ENCODE measurements at regions of chr16 and their contacts with region 1.

Region 1: GRCh38 chr16:83952940-83953795 is at the start of gene OSGIN1:
- DNase-seq: peak; percentile 33
- H3K4me3 ChIP-seq: peak within 1 kb of the TSS; percentile 12
- H3K27ac ChIP-seq: no peak within 1 kb of the TSS
- H3K4me1 ChIP-seq: peaks cover 8% of the 10 kb centered on the region
- CTCF ChIP-seq: no peak
- total RNA-seq, gene OSGIN1: 0.28 and 0.41 TPM in 2 replicates

Region 2: DNA sequence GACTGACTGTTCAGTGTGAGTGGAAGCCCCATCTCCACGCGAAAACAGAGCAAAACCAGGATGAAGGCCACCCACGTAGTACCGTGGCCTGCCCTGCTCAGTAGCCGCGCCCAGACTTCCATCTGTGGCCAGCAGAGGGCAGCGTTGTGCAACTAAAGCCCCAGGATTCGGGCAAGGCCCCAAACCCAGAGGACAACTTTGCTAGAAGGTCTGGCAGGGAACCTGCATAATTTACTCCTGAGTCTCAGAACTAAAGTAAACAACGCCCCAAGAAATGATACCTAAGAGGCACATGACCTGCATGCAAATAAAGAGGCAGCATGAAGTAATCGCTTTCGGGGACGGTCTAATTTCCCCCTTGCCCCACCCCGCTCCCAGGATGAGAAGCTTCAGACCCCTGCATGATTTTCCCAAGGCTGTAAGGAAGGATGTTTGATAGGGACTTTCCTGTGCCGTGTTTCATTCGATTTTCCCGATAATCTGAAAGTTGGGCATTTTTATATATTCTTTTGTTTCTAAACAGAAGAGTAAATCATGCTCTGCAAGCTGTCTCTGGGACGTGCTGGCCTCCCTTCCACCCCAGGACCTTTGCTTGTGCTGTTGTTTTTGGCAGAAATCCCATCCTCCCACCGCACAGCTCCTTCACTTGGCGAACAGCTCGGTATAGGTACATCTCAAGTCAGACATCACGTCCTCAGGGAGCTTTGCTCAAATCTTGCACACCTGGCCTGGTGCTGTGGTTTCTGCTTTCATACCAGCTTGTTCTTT is 126.8 kb before region 1 on chr16:
- CTCF ChIA-PET with region 1: no interaction called
- POLR2A ChIA-PET with region 1: no interaction called
- intact Hi-C with region 1: loop called (anchors 10 kb)
- DNase-seq: peak; percentile 74
- H3K4me3 ChIP-seq: no peak overlapping the region
- H3K27ac ChIP-seq: no peak overlapping the region
- H3K4me1 ChIP-seq: no peaks in the 10 kb centered on the region
- CTCF ChIP-seq: peak; percentile 95

Region 3: DNA sequence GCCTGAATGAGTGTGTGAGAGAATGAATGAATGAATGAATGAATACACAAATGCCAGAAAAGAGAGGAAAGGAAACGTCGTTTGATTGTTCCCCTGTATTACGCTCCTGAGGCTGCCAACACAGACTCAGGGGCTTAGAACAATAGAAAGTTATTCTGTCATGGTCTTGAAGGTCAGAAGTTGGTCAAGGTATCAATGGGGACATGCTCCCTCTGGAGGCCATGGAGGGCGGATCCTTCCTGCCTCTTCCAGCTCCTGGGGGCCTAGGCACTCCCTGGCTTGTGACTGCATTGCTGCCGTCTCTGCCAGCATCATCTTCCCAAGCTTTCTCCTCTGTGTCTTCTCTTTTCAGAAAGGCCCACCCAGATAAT is 90.9 kb after region 1 on chr16:
- CTCF ChIA-PET with region 1: no interaction called
- POLR2A ChIA-PET with region 1: no interaction called
- intact Hi-C with region 1: loop called (anchors 1 kb)
- DNase-seq: peak; percentile 14
- H3K4me3 ChIP-seq: no peak overlapping the region
- H3K27ac ChIP-seq: no peak overlapping the region
- H3K4me1 ChIP-seq: no peaks in the 10 kb centered on the region
- CTCF ChIP-seq: peak; percentile 59

Region 4: GRCh38 chr16:84065536-84066132 is 112.5 kb after region 1 on chr16:
- CTCF ChIA-PET with region 1: no interaction called
- POLR2A ChIA-PET with region 1: no interaction called
- intact Hi-C with region 1: loop called (anchors 1 kb)
- DNase-seq: peak; percentile 59
- H3K4me3 ChIP-seq: no peak overlapping the region
- H3K27ac ChIP-seq: no peak overlapping the region
- H3K4me1 ChIP-seq: no peaks in the 10 kb centered on the region
- CTCF ChIP-seq: peak; percentile 82

Region 5: DNA sequence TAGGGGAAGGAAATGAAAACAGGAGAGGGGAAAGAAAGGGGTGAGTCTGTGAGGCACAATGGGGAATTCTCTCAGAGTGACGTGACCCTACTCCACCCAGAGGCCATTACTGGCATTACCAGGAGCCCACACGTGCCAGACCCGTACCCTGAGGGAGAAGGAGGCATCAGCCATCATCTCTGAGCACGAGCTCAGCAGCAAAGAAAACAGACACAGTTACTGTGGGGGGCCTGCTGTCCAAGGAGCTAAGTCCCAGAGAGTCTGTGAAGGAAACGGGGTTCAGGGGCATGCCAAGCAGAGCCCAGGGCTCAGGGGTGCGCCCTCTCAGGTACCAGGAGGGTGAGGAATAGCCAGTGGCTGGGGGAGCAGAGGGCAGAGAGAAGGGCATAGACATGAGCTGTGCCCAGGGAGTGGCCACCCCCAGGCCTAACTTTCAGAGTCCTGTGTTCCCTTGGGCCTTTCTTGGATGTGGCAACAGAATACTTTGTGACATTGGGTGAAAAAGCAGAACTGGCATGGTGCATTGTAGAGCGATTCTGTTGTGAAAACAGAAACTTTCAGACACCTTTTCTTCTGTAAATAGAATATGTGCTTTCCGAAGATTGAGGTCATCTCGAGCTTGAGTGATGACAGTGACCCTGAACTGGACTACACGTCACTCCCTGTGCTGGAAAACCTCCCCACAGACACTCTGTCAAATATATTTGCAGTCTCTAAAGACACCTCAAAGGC is 222.3 kb after region 1 on chr16:
- CTCF ChIA-PET with region 1: no interaction called
- POLR2A ChIA-PET with region 1: no interaction called
- intact Hi-C with region 1: loop called (anchors 10 kb)
- DNase-seq: peak; percentile 61
- H3K4me3 ChIP-seq: no peak overlapping the region
- H3K27ac ChIP-seq: no peak overlapping the region
- H3K4me1 ChIP-seq: no peaks in the 10 kb centered on the region
- CTCF ChIP-seq: peak; percentile 77